ENCODE measurements at regions of chr2 and their contacts with region 1.

Region 1: GRCh38 chr2:39252888-39253518 is 9.2 kb upstream of the CDKL4 start:
- DNase-seq: no peak
- H3K4me3 ChIP-seq: no peak overlapping the region
- H3K27ac ChIP-seq: no peak overlapping the region
- H3K4me1 ChIP-seq: no peaks in the 10 kb centered on the region
- H3K27me3 ChIP-seq: no peaks in the 10 kb centered on the region
- CTCF ChIP-seq: no peak

Region 2: DNA sequence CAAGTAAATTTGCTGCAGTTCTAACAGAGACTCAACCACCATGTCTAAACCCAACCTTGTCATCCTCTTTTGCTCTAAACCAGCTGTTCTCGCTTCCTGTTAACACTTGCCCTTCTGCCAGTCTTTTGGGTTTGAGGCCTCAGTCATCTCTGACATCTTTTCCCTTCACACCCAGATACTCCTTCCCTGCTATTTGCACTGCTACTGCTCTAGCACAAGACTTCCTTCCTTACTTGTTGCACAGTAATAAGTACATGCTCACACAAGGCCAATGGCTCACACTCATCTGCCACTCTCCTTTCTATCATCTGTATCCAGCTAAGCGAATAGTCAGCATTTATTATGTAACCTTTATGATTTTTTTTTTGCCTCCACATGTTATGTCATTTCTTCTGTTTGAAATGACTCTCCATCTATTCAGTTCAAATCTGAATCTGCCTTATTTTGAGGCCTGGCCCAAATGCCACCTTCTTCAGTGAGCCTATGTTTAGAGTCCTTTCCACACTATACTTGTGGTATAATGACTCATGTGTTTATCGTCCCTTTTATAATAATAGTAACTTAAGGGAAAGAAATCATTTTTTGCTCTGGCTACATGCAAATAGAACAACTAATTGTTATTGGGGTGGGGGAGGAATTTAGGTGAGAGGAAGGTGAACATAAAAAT is 13.3 kb after region 1 on chr2:
- CTCF ChIA-PET with region 1: no interaction called
- POLR2A ChIA-PET with region 1: interaction called, 14 read pairs
- intact Hi-C with region 1: no loop called
- DNase-seq: no peak
- H3K4me3 ChIP-seq: no peak overlapping the region
- H3K27ac ChIP-seq: no peak overlapping the region
- H3K4me1 ChIP-seq: no peaks in the 10 kb centered on the region
- H3K27me3 ChIP-seq: no peaks in the 10 kb centered on the region
- CTCF ChIP-seq: no peak

Region 3: GRCh38 chr2:39679805-39680204 is 426.8 kb after region 1 on chr2:
- CTCF ChIA-PET with region 1: no interaction called
- POLR2A ChIA-PET with region 1: no interaction called
- intact Hi-C with region 1: no loop called
- DNase-seq: no peak
- H3K4me3 ChIP-seq: no peak overlapping the region
- H3K27ac ChIP-seq: no peak overlapping the region
- H3K4me1 ChIP-seq: no peaks in the 10 kb centered on the region
- H3K27me3 ChIP-seq: no peaks in the 10 kb centered on the region
- CTCF ChIP-seq: no peak

Region 4: GRCh38 chr2:39705638-39706037 is 452.6 kb after region 1 on chr2:
- CTCF ChIA-PET with region 1: no interaction called
- POLR2A ChIA-PET with region 1: no interaction called
- intact Hi-C with region 1: no loop called
- DNase-seq: no peak
- H3K4me3 ChIP-seq: no peak overlapping the region
- H3K27ac ChIP-seq: no peak overlapping the region
- H3K4me1 ChIP-seq: no peaks in the 10 kb centered on the region
- H3K27me3 ChIP-seq: no peaks in the 10 kb centered on the region
- CTCF ChIP-seq: no peak

Region 5: DNA sequence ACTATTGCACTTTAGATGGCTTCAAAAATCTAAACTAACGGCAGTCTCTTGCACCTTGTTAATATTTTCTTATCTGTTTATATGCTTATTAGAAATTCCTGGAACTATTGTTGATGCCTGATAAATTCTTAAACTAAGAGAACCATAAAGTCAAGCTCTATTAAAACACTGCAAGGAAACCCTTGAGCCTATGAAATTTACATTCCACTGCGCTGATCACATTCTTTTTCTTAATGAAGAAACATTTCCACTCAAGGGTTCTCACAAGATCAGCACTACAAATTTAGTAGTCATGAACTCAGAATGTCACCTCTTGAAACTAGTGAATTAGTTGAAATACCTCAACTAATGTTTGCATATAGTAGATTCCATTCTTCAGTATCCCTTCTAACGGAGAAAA is 1530.7 kb after region 1 on chr2:
- CTCF ChIA-PET with region 1: no interaction called
- POLR2A ChIA-PET with region 1: interaction called, 24 read pairs
- intact Hi-C with region 1: no loop called
- DNase-seq: no peak
- H3K4me3 ChIP-seq: no peak overlapping the region
- H3K27ac ChIP-seq: no peak overlapping the region
- H3K4me1 ChIP-seq: no peaks in the 10 kb centered on the region
- H3K27me3 ChIP-seq: no peaks in the 10 kb centered on the region
- CTCF ChIP-seq: no peak

Measured in PC-9 (cell line).